ENCODE measurements at regions of chr3 and their contacts with region 1.

Region 1: DNA sequence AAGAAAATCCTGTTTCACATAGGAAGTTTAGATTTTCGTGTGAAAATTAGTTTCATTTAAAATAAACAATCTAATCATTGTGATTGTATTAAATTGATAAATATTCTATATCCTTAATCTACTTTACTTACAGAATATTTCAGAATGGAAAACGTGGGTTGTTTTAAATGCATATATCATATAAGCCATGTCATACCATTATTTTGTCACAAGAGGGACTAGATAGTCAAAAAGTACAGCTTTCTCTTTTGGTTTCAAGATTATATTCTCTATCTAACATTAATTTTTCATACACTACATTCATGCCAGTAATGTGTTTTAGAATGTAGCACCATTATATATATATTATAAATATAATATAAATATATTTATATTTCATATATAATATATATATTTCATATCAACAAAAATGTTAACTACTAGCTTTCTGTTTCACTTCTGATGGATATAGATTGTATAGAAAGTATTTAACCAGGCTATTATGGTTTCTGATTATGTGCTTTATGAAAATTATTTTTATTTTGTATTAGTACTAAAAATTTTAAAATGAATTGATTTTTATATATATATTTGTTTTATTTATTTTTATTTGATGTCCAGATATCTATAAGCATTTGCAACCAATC is 45.3 kb downstream of the OSTN start:
- DNase-seq: no peak
- H3K4me3 ChIP-seq: no peak overlapping the region
- H3K27ac ChIP-seq: no peak overlapping the region
- H3K4me1 ChIP-seq: no peaks in the 10 kb centered on the region
- H3K27me3 ChIP-seq: no peaks in the 10 kb centered on the region
- CTCF ChIP-seq: peak in 1 of 3 donors; percentile 29
- POLR2A ChIP-seq: no peak

Region 2: DNA sequence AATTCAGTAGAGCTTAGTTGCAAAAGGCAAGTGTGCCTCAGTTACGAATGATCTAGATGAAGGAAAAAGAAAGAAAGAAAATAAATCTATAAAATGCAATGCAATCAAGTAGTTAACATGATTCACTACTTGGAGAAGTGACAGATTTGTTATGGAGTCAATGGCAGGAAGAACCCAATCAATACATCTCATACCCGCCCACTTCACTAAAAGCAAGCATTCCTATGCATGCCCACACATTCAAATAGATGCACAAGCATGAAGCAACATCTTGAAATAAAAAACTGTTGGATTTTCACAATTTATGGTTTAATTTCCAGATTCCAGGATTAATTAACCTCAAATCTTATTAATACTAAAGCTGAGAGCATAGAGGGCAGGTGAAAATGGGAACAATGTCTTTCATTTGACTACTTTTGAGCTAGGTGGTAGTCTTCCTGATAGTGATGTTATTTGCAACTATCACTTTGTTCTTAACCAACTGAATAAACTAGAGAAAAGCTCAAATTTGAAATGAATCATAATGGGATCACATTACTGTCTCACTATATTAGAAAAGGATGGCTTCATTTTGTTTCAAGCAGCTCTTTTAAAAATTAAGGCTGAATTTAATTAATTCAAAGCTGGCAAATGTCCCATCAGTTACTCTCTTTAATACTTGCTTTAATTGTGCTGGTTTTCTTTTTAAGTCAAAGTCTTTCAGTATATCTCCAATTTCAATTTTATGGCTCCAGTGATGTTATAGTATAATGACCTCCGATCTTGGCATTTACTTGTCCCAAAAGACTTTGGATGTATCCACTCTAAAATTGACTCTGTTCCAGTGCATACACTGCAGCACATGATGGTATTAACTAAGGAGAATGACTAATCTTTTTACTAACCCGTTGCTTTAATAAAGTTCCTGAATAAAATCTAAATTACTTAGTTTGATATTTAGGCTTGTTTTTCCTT is 38.2 kb after region 1 on chr3:
- intact Hi-C with region 1: no loop called
- DNase-seq: no peak
- H3K4me3 ChIP-seq: no peak overlapping the region
- H3K27ac ChIP-seq: no peak overlapping the region
- H3K4me1 ChIP-seq: no peaks in the 10 kb centered on the region
- H3K27me3 ChIP-seq: no peaks in the 10 kb centered on the region
- CTCF ChIP-seq: no peak
- POLR2A ChIP-seq: no peak

Region 3: DNA sequence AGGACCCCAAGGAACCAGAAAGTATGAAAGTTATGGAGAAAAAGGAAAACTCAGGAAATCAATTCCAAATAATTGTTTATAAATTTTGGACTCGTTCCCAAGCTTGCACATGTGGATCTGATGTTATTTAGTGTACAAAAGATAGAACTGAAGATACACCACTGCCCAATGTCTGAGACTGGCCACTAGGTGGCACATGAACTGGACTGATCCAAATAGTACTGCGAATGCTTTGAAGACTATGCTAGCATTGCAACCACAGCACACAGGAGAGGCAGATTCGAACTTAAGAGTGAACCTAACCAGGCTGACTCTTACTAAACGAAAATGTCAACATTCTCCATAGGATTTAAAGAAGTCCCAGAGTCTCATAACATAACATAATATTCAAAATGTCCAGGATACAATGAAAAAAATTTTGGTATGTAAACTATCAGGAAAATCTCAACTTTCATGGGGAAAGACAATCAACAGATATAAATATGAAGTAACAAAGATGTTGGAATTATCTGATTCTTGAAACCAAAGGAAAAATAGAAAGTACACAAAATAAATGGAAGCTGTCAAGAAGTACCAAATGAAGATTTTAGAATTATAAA is 886.3 kb after region 1 on chr3:
- intact Hi-C with region 1: loop called (anchors 10 kb)
- DNase-seq: peak; percentile 26 to 54
- H3K4me3 ChIP-seq: no peak overlapping the region
- H3K27ac ChIP-seq: no peak overlapping the region
- H3K4me1 ChIP-seq: no peaks in the 10 kb centered on the region
- H3K27me3 ChIP-seq: no peaks in the 10 kb centered on the region
- CTCF ChIP-seq: peak; percentile 48 to 55 (median 48)
- POLR2A ChIP-seq: no peak

Measured in breast epithelium (tissue), 4 donors.